ENCODE measurements at regions of chr1 and their contacts with region 1.

Region 1: GRCh38 chr1:207797229-207797961 is 45.5 kb downstream of the CD46 start:
- DNase-seq: peak; percentile 68
- CTCF ChIP-seq: peak; percentile 83

Region 2: GRCh38 chr1:207579436-207579799 is 218.0 kb before region 1 on chr1:
- CTCF ChIA-PET with region 1: interaction called, 12 read pairs
- POLR2A ChIA-PET with region 1: no interaction called
- DNase-seq: peak; percentile 30
- CTCF ChIP-seq: peak; percentile 47

Region 3: DNA sequence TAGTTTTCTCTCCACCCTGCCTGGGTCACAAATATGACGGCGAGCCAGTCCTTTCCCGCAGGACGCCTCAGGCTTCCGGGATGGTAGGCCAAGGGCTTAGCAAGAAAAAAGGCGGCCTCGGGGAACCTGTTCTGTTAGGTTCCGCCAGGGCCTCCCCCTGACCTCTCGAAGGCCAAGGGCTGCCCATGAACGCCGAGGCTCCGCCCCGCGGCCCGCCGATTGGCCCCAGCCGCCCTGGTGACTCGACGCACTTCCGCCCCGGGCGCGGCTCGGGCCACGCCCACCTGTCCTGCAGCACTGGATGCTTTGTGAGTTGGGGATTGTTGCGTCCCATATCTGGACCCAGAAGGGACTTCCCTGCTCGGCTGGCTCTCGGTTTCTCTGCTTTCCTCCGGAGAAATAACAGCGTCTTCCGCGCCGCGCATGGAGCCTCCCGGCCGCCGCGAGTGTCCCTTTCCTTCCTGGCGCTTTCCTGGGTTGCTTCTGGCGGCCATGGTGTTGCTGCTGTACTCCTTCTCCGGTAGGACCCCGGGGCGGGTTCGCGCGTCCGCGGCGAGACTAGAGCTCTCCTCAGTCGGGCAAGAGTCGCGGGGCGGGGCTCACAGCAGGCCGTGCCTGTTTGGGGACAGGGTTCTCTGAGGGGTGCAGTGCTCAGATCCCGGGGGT is 45.5 kb before region 1 on chr1 and contains the start of gene CD46:
- CTCF ChIA-PET with region 1: interaction called, 12 read pairs
- POLR2A ChIA-PET with region 1: no interaction called
- DNase-seq: peak; percentile 93
- CTCF ChIP-seq: no peak

Region 4: DNA sequence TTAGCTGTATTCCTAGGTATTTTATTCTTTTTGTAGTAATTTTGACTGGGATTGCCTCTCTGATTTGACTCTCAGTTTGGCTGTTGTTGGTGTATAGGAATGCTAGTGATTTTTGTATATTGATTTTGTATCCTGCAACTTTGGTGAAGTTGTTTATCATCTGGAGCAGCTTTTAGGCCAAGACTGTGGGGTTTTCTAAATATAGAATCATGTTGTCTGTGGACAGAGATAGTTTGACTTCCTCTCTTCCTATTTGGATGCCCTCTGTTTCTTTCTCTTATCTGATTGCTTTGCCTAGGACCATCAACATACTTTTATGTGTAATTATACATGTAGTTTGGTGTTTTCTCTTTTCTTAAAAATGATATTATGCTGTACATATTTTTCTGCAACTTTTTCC is 18.4 kb before region 1 on chr1:
- CTCF ChIA-PET with region 1: interaction called, 10 read pairs
- POLR2A ChIA-PET with region 1: no interaction called
- DNase-seq: no peak
- CTCF ChIP-seq: no peak

Region 5: DNA sequence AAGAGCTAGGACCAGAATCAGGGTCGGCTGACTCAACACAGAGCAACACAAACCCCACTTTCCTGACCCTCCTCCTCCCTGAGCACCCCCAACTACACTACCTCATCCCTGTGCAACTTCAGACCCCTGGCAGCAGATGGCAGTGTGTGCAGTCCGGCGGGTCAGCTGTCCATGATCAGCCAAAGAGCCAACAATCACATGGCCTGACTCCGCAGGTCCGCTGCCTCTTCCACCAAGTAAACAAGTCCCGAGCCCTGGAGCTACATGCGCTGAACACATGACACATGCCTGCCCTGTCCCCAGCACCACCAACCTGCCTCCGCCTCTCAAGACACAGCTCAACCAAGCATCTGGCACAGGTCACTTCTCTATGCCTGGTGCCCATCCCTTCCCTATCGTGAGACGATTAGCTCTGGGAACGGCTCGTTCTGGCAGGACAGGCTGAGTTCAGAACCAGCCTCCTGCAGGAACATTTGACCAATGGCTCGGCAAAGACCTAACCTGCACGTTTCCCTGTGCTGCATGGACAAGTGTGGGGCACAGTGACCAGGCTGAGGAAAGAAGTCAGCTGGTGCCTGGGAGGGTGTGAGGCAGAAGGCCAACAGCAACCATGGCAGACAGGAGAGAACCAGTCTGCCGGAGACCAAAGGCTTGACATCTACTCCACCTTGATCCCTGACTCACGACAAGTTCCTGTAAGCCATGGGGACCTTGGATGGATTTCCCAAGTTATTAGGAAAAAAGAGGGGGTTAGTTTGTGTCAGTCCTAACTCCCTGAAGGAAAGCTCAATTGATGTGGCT is 14.7 kb after region 1 on chr1:
- CTCF ChIA-PET with region 1: interaction called, 41 read pairs
- POLR2A ChIA-PET with region 1: interaction called, 10 read pairs
- DNase-seq: no peak
- CTCF ChIP-seq: peak; percentile 40

Region 6: GRCh38 chr1:207822602-207823451 is 25.4 kb after region 1 on chr1:
- CTCF ChIA-PET with region 1: interaction called, 27 read pairs
- POLR2A ChIA-PET with region 1: interaction called, 10 read pairs
- DNase-seq: peak; percentile 94
- CTCF ChIP-seq: no peak

Region 7: GRCh38 chr1:207828485-207829158 is 31.2 kb after region 1 on chr1:
- CTCF ChIA-PET with region 1: interaction called, 27 read pairs
- POLR2A ChIA-PET with region 1: interaction called, 3 read pairs
- DNase-seq: peak; percentile 47
- CTCF ChIP-seq: peak; percentile 81

Measured in GM10248 (cell line).